Psoas muscle (tissue), 8 donors: ENCODE measurements at regions of chr13 and their contacts with region 1.

Region 1: DNA sequence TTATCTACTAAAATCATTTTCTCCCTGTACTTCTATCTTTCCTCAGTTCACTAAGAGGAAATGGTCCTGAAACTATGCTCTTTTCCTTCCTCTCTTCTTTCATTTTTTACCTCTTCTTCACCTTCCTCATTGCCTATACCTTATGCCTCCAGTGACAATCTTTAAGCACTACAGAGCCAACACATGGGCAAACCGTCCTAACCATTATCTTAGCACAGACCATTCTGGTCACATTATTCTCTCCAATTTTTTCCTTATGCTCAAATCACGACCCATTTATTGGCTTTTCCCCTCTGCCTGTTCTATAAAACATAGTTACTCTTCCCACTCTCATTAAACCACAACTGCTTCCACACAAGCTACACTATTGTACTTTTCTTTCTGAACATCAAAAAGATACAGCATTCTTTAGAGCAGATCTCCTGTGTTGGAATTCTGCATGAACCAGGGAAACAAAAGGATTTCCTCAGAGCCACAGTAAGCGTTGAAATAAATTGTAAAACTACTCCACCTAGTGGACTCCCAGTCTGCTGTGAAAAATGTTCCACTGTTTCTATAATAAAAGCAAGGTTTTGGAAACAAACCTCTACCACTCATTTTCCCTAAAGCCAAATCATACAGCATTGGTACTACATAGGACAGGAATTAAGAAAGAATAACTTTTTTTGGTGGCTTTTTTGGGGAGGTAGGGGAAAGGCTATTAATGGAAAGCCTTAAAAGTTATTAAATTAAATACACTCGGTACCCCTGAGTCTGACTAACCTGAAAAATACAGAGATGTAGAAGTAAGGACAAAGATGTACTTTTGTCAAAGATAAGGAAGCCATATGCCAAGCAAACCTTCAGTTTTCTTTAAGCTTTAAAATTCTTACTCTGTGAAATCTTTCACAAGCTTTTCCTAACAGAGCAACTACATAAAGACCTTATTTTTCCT is 19.5 kb downstream of the NUFIP1 start:
- DNase-seq: no peak
- ATAC-seq: peak; percentile 51 to 66 (median 57)
- H3K4me3 ChIP-seq: no peak overlapping the region
- H3K27ac ChIP-seq: peak overlapping the region; percentile 51
- H3K4me1 ChIP-seq: peaks cover 47% of the 10 kb centered on the region
- H3K27me3 ChIP-seq: no peaks in the 10 kb centered on the region
- CTCF ChIP-seq: peak; percentile 86

Region 2: DNA sequence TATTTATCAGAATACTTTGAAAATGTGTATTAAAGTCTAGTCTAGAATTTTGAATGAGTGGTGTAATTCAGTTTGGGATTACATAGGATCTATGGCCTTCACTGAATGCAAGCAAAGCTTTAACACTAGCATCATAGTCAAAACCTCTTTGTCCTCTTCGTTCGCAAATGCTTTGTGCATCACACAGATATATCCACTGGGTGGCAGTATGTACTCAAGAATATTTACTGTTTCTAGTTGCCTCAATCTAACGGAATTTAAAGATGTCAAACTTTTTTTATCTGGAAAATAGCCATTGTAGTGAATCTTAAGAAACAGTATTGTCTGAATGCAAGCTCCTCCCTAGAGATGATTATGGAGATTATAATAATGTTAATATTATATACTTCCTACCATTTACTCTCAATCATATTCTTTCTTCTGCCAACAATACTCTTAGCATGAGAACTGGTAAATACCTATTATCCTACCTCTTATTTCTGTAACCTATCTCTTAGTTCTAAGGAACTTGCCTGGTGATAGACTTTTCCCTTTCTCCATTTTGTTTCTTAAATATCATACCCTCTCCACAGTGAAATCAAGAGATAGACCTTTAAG is 1064.3 kb before region 1 on chr13:
- intact Hi-C with region 1: loop called in 1 of 2 experiments (anchors 10 kb)
- DNase-seq: no peak
- ATAC-seq: peak; percentile 66 to 89 (median 82)
- H3K4me3 ChIP-seq: no peak overlapping the region
- H3K27ac ChIP-seq: no peak overlapping the region
- H3K4me1 ChIP-seq: peaks cover 6% of the 10 kb centered on the region
- H3K27me3 ChIP-seq: no peaks in the 10 kb centered on the region
- CTCF ChIP-seq: peak; percentile 88

Region 3: DNA sequence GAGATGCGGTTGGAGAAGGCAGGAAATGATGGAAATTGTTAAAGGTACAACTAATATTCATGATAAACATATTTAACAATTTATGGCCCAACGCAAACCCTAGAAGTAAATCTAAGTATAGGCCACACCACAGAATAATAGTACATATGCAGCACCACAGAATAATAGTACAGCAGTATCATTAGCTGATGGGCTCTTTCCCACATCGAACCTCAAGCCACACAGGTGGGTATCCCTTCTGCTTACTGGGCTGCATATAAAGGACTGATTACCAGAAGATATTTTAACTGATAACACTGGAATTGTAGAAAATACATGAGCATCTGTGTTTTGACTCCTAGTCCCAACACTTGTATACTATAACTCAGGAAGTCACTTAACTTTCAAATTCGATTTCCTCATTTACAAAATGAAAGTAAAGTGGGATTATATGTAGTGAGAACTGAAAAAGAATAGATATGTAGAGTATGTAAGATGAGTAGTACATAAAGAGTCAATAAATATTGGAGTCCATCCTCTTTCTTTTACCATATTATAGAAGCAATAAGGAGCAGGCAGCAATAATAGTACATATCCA is 485.2 kb before region 1 on chr13:
- intact Hi-C with region 1: loop called (anchors 2 kb)
- DNase-seq: no peak
- ATAC-seq: no peak
- H3K4me3 ChIP-seq: peak overlapping the region; percentile 11
- H3K27ac ChIP-seq: no peak overlapping the region
- H3K4me1 ChIP-seq: peaks cover 33% of the 10 kb centered on the region
- H3K27me3 ChIP-seq: no peaks in the 10 kb centered on the region
- CTCF ChIP-seq: no peak

Region 4: DNA sequence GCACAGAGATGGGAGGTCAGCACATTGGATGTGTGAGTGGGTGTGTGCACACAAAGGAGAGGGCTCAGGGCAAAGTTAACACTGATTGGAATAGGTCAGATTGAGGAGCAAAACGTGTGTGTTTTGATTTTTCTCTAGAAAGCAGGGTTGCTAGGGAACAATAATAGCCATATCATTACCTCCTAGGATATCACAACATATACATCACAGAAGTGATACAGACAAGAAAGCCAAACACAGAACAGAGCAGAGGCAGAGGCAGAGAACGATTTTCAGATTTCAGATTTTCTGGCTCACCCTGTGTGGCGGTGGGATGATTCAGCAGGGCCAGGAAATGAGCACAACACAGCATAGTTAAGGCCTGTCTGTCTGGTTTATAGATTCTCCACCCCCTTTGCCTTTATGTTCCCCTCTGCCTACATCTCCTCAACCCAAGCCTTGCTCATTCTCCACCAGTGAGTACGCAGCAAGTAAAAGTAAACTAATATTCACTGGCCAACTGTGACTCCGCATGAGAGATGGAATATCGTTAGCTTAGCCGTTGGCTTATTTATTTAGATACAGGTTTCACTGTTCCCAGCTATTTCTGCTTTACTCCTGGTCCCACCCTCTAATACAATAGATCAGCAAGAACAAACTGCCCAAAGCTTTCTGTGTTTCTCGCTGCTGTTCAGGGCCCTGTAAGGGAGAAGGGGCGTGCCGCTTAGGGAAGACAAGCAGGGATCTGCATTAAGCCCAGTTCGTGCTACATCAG is 211.0 kb before region 1 on chr13:
- intact Hi-C with region 1: loop called in 1 of 2 experiments (anchors 10 kb)
- DNase-seq: no peak
- ATAC-seq: peak; percentile 44 to 65 (median 48)
- H3K4me3 ChIP-seq: peak overlapping the region; percentile 49
- H3K27ac ChIP-seq: peak overlapping the region; percentile 97
- H3K4me1 ChIP-seq: peaks cover 12% of the 10 kb centered on the region
- H3K27me3 ChIP-seq: no peaks in the 10 kb centered on the region
- CTCF ChIP-seq: no peak

Region 5: DNA sequence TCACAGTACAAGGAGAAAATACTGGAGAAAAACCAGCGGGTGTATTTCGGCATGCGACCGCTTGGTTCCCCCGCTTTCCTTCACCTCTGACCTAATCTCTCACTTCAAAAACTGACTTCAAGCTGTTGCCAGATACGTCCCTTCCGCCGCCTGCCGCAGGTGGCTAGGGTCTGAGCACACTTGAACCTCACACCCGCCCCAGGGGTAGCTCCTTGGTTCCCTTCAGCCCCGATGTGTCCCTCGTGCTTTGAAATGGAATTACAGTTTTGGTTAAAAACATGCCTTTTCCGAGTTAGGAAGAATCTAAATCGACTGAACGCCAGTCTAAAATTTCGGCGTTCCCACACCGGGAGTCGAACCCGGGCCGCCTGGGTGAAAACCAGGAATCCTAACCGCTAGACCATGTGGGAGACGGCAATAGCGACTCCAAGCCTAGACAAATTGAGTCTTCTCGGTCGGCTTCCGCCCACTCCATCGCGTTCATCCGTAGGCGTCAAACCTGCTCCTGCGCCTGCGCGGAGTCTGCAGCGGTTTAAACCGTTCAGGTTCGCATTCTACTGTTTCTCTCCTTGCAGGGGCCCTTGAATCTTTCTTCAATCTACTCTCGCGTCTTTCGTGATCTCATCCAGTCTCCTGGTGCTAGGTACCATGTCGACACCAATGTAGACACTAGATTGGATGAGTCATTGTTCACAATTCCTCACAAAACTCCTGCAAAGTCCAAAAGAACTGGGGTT is 52.1 kb before region 1 on chr13:
- intact Hi-C with region 1: loop called in 1 of 2 experiments (anchors 2 kb)
- DNase-seq: peak; percentile 93 to 97
- ATAC-seq: peak; percentile 69 to 79 (median 72)
- H3K4me3 ChIP-seq: peak overlapping the region; percentile 70
- H3K27ac ChIP-seq: peak overlapping the region; percentile 93
- H3K4me1 ChIP-seq: peaks cover 26% of the 10 kb centered on the region
- H3K27me3 ChIP-seq: no peaks in the 10 kb centered on the region
- CTCF ChIP-seq: peak; percentile 41

Region 6: GRCh38 chr13:44930963-44931623 is 38.7 kb before region 1 on chr13:
- intact Hi-C with region 1: loop called in 1 of 2 experiments (anchors 5 kb)
- DNase-seq: peak in 1 of 2 donors; percentile 56
- ATAC-seq: peak; percentile 85 to 93 (median 93)
- H3K4me3 ChIP-seq: no peak overlapping the region
- H3K27ac ChIP-seq: peak overlapping the region; percentile 75
- H3K4me1 ChIP-seq: peaks cover 37% of the 10 kb centered on the region
- H3K27me3 ChIP-seq: no peaks in the 10 kb centered on the region
- CTCF ChIP-seq: no peak

Region 7: DNA sequence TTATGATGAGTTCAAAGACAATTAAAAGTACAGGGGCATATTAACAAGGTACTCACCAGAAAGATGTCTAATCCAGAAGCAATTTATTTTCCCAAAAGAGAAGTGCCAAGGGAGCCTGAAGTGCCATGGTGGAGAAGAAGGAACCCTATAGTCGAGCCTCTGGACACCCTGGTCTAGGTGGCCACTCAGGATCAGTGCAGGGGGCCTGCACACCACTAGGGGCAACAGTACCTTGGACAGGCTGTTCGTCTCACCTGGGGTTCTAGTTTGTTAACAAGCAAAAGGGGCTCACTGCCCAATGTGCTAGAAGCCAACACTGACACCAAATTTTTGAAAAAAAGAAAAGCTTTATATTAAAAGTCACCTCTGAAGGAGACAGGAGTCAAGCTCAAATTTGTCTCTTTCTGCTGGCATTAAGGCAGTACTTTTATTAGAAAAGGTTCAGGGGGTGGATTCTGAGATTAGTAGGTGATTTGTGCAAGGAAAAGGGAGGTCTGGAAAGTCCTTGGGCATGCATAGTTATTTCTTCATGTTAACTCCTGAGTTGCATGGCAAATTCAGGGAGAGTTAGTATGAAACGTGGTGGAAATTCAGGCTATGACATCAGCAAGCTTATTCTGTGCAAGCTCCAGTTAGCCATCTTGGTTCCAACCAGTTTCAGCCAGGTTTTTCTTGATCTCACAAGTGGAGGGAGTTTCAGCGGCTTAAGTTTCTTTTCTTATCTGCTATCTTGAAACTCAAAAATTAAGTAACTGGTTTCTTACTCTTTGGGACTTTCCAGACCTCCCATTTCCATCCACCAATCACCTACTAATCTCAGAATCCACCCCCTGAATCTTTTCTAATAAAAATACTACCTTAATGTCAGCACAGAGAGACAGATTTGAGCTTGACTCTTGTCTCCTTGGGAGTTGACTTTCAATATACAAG is 731.4 kb after region 1 on chr13:
- intact Hi-C with region 1: no loop called
- DNase-seq: no peak
- ATAC-seq: no peak
- H3K4me3 ChIP-seq: no peak overlapping the region
- H3K27ac ChIP-seq: no peak overlapping the region
- H3K4me1 ChIP-seq: no peaks in the 10 kb centered on the region
- H3K27me3 ChIP-seq: peaks cover 0 to under 1% (median 0%) of the 10 kb centered on the region in 3 donors
- CTCF ChIP-seq: no peak